ENCODE measurements at regions of chr12 and their contacts with region 1.

Region 1: GRCh38 chr12:69570545-69571399 is 14.5 kb upstream of the CCT2 start:
- DNase-seq: peak; percentile 81
- ATAC-seq: peak; percentile 63
- H3K4me3 ChIP-seq: no peak overlapping the region
- H3K4me3 Mint-ChIP-seq: no peak overlapping the region
- H3K27ac ChIP-seq: peak overlapping the region in 1 of 2 donors; percentile 82
- H3K27ac Mint-ChIP-seq: no peak overlapping the region
- H3K4me1 ChIP-seq: no peaks in the 10 kb centered on the region
- H3K4me1 Mint-ChIP-seq: peaks cover 2% of the 10 kb centered on the region
- H3K27me3 ChIP-seq: no peaks in the 10 kb centered on the region
- H3K27me3 Mint-ChIP-seq: no peaks in the 10 kb centered on the region
- CTCF ChIP-seq: peak; percentile 94

Region 2: DNA sequence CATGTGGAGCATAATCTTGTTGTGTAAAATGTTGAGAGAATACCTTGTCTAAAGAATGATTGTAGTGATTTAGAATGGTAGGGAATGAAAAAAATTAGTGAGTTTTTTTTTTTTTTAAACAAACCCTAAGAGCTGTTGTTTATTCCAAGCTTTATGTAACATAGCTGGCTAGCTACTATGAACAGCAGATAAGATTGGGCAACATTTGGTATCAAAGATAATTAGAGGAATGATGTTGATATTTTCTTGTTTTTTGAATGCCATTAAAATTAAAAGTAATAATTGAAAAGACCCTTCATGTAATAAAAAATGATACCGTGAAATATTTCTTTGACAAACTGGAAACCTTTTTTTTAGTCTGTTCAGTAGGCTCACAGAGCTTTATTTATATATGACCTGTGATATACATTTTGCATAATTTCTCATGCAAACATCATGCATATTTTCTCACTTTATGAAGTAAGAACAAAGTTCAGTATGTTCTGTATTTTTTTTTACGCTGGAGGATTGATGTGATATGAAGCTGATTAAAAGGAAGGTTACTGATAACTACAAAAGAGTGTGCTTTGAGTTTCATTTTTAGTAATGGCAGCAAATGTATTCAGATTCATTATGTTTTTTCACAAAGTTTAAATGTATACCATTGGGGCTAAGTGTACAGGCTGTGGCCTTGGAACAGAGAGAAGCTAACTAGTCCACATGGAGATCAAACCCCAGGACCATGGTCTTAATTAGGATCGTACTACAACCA is 323.3 kb before region 1 on chr12:
- CTCF ChIA-PET with region 1: interaction called, 5 read pairs
- POLR2A ChIA-PET with region 1: no interaction called
- intact Hi-C with region 1: loop called (anchors 5 kb)
- DNase-seq: no peak
- ATAC-seq: no peak
- H3K4me3 ChIP-seq: no peak overlapping the region
- H3K4me3 Mint-ChIP-seq: peak overlapping the region; percentile 11
- H3K27ac ChIP-seq: peak overlapping the region in 1 of 2 donors; percentile 24
- H3K27ac Mint-ChIP-seq: no peak overlapping the region
- H3K4me1 ChIP-seq: peaks cover 22 to 33% of the 10 kb centered on the region in 2 donors
- H3K4me1 Mint-ChIP-seq: peaks cover 75% of the 10 kb centered on the region
- H3K27me3 ChIP-seq: no peaks in the 10 kb centered on the region
- H3K27me3 Mint-ChIP-seq: no peaks in the 10 kb centered on the region
- CTCF ChIP-seq: no peak

Region 3: GRCh38 chr12:69298947-69299346 is 271.8 kb before region 1 on chr12:
- CTCF ChIA-PET with region 1: interaction called, 13 read pairs
- POLR2A ChIA-PET with region 1: no interaction called
- intact Hi-C with region 1: no loop called
- DNase-seq: no peak
- ATAC-seq: no peak
- H3K4me3 ChIP-seq: no peak overlapping the region
- H3K4me3 Mint-ChIP-seq: no peak overlapping the region
- H3K27ac ChIP-seq: no peak overlapping the region
- H3K27ac Mint-ChIP-seq: no peak overlapping the region
- H3K4me1 ChIP-seq: no peaks in the 10 kb centered on the region
- H3K4me1 Mint-ChIP-seq: no peaks in the 10 kb centered on the region
- H3K27me3 ChIP-seq: no peaks in the 10 kb centered on the region
- H3K27me3 Mint-ChIP-seq: no peaks in the 10 kb centered on the region
- CTCF ChIP-seq: no peak

Region 4: GRCh38 chr12:69415471-69416275 is 155.1 kb before region 1 on chr12:
- CTCF ChIA-PET with region 1: interaction called, 30 read pairs
- POLR2A ChIA-PET with region 1: no interaction called
- intact Hi-C with region 1: loop called (anchors 1 kb)
- DNase-seq: peak; percentile 45
- ATAC-seq: peak; percentile 31
- H3K4me3 ChIP-seq: no peak overlapping the region
- H3K4me3 Mint-ChIP-seq: no peak overlapping the region
- H3K27ac ChIP-seq: no peak overlapping the region
- H3K27ac Mint-ChIP-seq: no peak overlapping the region
- H3K4me1 ChIP-seq: no peaks in the 10 kb centered on the region
- H3K4me1 Mint-ChIP-seq: no peaks in the 10 kb centered on the region
- H3K27me3 ChIP-seq: no peaks in the 10 kb centered on the region
- H3K27me3 Mint-ChIP-seq: no peaks in the 10 kb centered on the region
- CTCF ChIP-seq: peak; percentile 43

Region 5: GRCh38 chr12:69548687-69549086 is 22.1 kb before region 1 on chr12:
- CTCF ChIA-PET with region 1: interaction called, 16 read pairs
- POLR2A ChIA-PET with region 1: no interaction called
- intact Hi-C with region 1: no loop called
- DNase-seq: no peak
- ATAC-seq: no peak
- H3K4me3 ChIP-seq: no peak overlapping the region
- H3K4me3 Mint-ChIP-seq: no peak overlapping the region
- H3K27ac ChIP-seq: no peak overlapping the region
- H3K27ac Mint-ChIP-seq: no peak overlapping the region
- H3K4me1 ChIP-seq: no peaks in the 10 kb centered on the region
- H3K4me1 Mint-ChIP-seq: no peaks in the 10 kb centered on the region
- H3K27me3 ChIP-seq: no peaks in the 10 kb centered on the region
- H3K27me3 Mint-ChIP-seq: no peaks in the 10 kb centered on the region
- CTCF ChIP-seq: no peak

Region 6: DNA sequence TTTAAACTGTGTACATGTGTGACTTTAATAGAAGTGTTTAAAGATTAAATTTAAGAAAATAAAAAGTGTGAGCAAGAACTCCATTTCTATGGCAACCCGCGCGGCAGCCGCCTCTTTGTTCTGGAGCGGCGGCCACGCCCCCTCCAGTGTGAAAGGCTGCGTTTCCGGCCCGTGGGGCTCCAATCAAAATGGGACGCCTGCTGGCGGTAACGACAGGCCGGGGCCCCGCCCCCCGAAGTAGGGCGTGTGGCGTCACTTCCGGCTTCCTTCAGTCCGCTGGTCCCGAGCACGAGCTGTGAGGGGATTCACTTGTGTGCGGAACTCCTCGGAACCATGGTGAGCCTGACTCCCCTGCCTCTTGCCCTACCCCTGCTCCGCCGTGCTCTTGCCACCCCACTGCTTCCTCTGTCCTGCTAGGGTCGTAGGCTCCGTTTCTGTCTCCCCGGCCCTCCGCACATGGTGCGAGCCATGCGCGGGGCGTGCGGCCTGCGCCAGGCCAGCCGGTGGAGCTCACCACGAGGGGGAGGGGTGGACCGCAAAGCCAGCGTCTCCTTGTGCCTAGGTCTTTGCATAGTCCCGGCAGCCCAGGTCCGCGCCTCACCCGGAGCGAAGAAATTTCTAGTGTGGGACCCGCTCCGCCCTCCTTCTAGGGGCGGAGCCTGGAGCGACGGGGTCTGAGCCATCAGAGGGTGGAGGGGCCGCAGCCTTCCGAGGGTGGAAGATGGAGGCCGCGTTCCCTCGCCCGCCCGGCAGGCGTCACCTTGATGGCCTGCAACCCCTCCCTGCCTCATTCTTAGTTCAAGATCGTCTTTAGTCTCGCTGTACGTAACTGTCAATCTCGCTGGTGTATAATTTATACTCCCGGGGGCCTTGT is 14.7 kb after region 1 on chr12 and contains the start of gene CCT2:
- CTCF ChIA-PET with region 1: interaction called, 35 read pairs
- POLR2A ChIA-PET with region 1: no interaction called
- intact Hi-C with region 1: loop called (anchors 1 kb)
- DNase-seq: peak; percentile 98
- ATAC-seq: peak; percentile 93
- H3K4me3 ChIP-seq: peak within 1 kb of the TSS; percentile 83 to 96 (median 90)
- H3K4me3 Mint-ChIP-seq: peak within 1 kb of the TSS; percentile 97
- H3K27ac ChIP-seq: peak within 1 kb of the TSS; percentile 91 to 97
- H3K27ac Mint-ChIP-seq: peak within 1 kb of the TSS; percentile 96
- H3K4me1 ChIP-seq: peaks cover 6 to 11% of the 10 kb centered on the region in 2 donors
- H3K4me1 Mint-ChIP-seq: peaks cover 12% of the 10 kb centered on the region
- H3K27me3 ChIP-seq: no peaks in the 10 kb centered on the region
- H3K27me3 Mint-ChIP-seq: no peaks in the 10 kb centered on the region
- CTCF ChIP-seq: peak; percentile 60
- total RNA-seq, gene CCT2: 125 TPM in 2 replicates

Measured in B cell (primary cell).